ENCODE measurements at regions of chr2 and their contacts with region 1.

Region 1: GRCh38 chr2:219160186-219161017 is at the start of gene NHEJ1:
- DNase-seq: peak; percentile 95
- H3K4me3 Mint-ChIP-seq: peak within 1 kb of the TSS; percentile 77
- H3K27ac Mint-ChIP-seq: peak within 1 kb of the TSS; percentile 37
- H3K4me1 Mint-ChIP-seq: peaks cover 14% of the 10 kb centered on the region
- H3K27me3 Mint-ChIP-seq: no peaks in the 10 kb centered on the region
- CTCF ChIP-seq: peak; percentile 96
- total RNA-seq, gene NHEJ1: 7.5 and 11.5 TPM in 2 replicates

Region 2: GRCh38 chr2:218995972-218996711 is 164.3 kb before region 1 on chr2:
- CTCF ChIA-PET with region 1: interaction called, 17 read pairs
- POLR2A ChIA-PET with region 1: no interaction called
- intact Hi-C with region 1: loop called (anchors 1 kb)
- DNase-seq: peak; percentile 82
- H3K4me3 Mint-ChIP-seq: peak overlapping the region; percentile 73
- H3K27ac Mint-ChIP-seq: no peak overlapping the region
- H3K4me1 Mint-ChIP-seq: peaks cover 15% of the 10 kb centered on the region
- H3K27me3 Mint-ChIP-seq: peaks cover 22% of the 10 kb centered on the region
- CTCF ChIP-seq: peak; percentile 84

Region 3: DNA sequence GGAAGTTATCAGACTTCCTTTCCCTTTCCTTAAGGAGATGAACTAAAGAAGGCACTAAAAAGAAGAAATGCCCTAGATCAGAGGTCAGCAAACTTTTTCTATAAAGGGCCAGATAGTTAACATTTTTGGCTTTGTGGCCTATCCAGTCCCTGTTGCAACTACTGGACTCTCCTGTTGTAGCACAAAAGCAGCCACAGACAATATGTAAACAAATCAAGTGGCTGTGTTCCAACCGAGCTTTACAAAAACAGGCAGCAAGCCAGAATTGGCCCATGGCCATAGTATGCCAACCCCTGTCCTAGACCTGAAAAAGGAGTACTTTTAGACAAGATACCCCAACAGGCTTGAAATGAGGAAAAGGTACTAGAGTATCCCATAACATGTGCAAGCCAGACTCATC is 10.7 kb before region 1 on chr2:
- CTCF ChIA-PET with region 1: interaction called, 12 read pairs
- POLR2A ChIA-PET with region 1: interaction called, 5 read pairs
- intact Hi-C with region 1: no loop called
- DNase-seq: peak; percentile 49
- H3K4me3 Mint-ChIP-seq: no peak overlapping the region
- H3K27ac Mint-ChIP-seq: no peak overlapping the region
- H3K4me1 Mint-ChIP-seq: peaks cover 16% of the 10 kb centered on the region
- H3K27me3 Mint-ChIP-seq: no peaks in the 10 kb centered on the region
- CTCF ChIP-seq: no peak

Region 4: GRCh38 chr2:219206442-219207253 is 46.2 kb after region 1 on chr2 and contains the start of gene ZFAND2B:
- CTCF ChIA-PET with region 1: interaction called, 3 read pairs
- POLR2A ChIA-PET with region 1: no interaction called
- intact Hi-C with region 1: loop called (anchors 1 kb)
- DNase-seq: peak; percentile 93
- H3K4me3 Mint-ChIP-seq: peak within 1 kb of the TSS; percentile 88
- H3K27ac Mint-ChIP-seq: peak within 1 kb of the TSS; percentile 94
- H3K4me1 Mint-ChIP-seq: peaks cover 15% of the 10 kb centered on the region
- H3K27me3 Mint-ChIP-seq: no peaks in the 10 kb centered on the region
- CTCF ChIP-seq: no peak
- total RNA-seq, gene ZFAND2B: 61.0 and 73.1 TPM in 2 replicates

Region 5: DNA sequence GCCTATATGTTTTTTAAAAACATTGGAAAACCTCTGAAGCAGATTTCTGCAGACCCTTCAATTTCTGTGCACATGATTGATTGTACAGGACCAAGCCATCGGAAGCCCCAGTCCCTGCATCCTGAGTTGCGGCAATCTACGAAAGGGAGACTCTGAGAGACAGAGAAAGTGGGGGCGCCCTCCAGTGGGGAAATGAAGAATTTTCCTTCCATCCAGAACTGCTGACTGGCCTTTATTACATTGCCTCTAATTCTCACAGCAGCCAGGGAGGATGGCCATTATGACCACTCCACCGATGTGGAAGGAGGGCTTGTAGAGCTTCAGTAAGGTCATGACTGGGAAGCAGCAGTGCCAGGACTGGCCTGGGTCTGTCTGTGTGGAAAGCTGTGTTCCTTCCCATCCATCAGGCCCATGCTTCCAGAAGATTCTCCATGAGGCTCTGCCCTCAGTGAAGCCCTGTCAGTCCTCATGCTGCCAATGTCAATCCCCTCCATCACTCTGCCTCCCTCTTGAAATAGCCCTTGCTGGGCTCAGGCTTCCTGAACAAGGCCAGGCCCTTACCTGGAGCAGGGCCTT is 192.1 kb after region 1 on chr2:
- CTCF ChIA-PET with region 1: interaction called, 4 read pairs
- POLR2A ChIA-PET with region 1: no interaction called
- intact Hi-C with region 1: loop called (anchors 1 kb)
- DNase-seq: peak; percentile 72
- H3K4me3 Mint-ChIP-seq: no peak overlapping the region
- H3K27ac Mint-ChIP-seq: no peak overlapping the region
- H3K4me1 Mint-ChIP-seq: no peaks in the 10 kb centered on the region
- H3K27me3 Mint-ChIP-seq: peaks cover 44% of the 10 kb centered on the region
- CTCF ChIP-seq: peak; percentile 67

Measured in MCF 10A (cell line).